Posterior cingulate gyrus (tissue), 11 donors: ENCODE measurements at regions of chr2 and their contacts with region 1.

Region 1: DNA sequence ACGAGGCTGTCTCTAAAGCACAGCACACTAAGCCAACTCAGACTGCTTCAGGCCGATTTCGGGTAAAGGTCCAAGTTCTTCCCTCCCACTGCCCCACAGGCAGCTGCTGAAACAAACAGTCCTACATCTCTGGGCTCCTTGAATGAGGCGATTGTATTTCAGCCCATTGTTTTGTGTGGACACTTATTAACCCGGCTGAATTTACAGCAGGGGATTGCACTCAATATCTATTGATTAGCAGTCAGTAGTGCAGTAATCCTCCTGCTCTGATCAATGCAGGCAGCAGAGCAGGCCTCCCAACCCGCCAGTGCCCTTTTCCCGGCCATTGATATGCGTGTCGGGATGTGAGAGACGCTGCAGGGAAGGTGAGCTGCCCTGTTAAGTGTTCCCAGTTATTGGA is 330.1 kb downstream of the CMPK2 start:
- DNase-seq: peak in 4 of 10 donors; percentile 33 to 92 (median 52)

Region 2: GRCh38 chr2:5190047-5190446 is 1345.5 kb before region 1 on chr2:
- intact Hi-C with region 1: no loop called
- DNase-seq: no peak

Region 3: DNA sequence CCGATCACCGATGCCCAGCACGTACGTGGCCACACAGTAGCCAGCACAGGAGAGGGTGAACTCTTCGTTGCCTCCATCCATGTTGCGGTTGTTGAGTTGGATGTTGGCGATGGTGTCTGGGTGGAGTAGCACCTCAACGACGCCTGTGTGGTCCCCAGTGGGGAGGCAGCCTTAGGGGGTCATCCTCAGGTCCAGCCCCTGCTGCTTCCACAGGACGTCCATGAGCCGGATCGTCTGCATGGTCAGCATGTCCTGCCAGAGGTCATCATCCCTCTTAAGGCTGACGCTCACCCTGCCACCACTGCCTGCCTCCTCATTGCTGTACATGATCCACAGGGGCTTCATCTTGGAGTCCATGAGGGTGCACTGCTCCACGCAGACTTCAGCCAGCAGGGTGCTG is 39.2 kb before region 1 on chr2:
- intact Hi-C with region 1: no loop called
- DNase-seq: no peak

Region 4: DNA sequence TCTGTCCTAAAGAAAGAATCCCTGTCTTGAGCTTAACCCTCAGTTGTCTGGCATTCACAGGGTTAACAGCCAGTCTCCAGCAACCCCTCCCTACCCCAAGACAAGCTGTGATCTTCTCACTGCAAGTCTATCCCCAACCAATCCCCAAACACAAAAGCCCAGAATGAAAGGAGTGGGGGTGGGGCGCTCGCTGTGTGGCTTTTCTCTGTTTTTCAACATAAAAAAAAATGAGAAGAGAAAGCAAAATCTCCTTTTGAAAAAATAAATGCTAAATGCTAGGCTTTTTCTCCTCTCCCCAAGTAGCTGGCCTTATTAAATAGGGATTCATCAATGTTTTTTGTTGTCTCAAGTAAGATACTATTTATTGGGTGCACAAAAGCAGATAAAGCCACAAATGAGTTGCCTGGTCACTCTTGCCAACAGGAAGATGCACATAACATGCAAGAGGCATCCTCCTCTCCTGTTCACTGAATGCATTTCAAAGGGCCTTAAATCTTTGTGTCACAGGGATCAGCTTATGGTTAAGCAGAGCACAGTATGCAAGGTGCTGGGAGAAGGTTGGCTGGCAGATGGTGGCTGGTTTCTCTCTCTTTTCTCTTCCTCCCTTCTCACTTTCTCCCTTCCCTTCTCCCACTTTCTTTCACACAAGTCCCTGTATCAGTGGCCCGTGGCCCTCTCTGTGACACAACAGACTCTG is 104.5 kb after region 1 on chr2:
- intact Hi-C with region 1: loop called (anchors 10 kb)
- DNase-seq: no peak